Left colon (tissue), 2 donors: ENCODE measurements at regions of chr22 and their contacts with region 1.

Region 1: GRCh38 chr22:40764763-40765441 is 54.2 kb downstream of the SLC25A17 start:
- DNase-seq: no peak
- ATAC-seq: no peak

Region 2: DNA sequence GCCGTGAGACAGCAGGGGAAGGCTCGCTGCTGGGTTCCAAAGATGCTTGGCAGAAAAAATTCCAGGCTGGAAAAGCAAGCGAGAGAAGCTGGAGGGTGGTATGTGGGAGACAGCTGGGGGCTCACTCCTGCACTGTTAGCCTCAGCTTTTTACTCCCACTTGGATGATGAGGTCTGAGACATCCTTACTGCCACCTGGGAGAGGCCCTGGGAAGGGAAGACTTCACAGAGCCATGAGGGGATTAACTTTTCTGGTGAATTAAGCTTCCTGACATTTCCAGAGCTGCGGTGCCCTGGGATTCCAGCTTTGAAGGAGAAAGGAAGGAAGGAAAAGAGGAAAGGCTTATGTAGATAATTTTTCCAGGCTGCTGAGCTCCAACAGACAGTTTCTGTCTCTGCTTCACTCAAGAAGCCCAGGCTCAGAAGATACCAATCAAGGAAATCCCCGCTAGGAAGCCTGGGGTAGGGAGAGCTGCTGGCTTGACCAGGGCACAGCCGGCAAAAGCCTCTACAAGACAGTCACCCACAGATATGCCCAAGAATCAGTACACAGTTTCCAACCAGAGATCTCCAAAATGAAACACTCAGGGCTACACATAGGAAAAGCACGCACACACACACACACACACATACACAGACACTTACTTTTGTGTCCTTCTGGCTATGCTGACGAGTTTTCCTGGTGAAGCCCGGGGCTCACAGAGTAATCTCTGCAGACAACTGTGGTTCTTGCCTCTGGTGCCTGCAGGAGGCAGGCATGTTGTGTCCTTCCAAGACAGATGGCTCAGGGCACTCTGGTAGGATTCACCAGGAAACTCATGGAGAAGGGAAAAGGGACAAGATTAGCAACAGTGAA is 84.7 kb before region 1 on chr22:
- intact Hi-C with region 1: loop called in 1 of 2 experiments (anchors 10 kb)
- DNase-seq: no peak
- ATAC-seq: no peak